ENCODE measurements at regions of chr7 and their contacts with region 1.

Region 1: DNA sequence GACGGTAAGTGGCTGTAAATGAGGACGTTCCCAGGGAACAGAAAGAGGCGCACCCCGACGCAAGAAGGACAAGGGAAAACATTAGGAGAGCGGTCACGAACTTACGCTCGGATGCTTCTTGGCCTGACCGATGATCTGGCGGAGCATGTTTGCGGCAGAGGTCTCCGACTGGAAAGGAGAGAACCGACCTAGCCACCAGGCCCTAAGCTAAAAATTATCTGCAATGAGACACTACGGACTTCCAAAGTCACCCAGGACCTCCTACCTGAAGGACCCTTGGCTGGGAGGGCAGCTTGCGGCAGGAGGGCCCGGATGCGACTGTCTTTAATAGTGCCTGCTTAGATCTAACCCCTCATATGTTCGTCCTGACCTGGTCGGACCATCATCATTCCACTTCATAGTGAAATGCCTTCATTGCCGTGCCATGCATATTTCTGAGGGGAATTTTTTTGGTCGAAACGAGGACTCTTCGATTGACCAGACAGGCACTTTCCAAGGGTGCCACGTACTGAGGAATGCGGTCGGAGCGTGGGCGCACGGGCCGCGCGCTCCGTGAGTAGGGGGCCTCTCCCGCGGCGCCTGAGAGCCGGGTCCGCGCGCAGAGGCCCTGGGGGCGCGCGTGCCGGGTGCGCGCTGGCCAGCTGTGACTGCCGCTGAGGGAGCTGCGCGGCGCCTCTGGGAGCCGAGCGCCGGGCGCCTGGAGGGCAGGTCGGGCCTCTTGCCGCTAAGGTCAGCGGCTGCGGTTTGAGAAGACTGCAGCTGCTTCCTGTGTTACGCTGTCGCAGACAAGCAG is 33.6 kb upstream of the PHF14 start:
- DNase-seq: peak; percentile 94
- ATAC-seq: peak; percentile 99
- H3K4me3 ChIP-seq: peak overlapping the region; percentile 85 to 94
- H3K27ac ChIP-seq: peak overlapping the region; percentile 90 to 95
- H3K4me1 ChIP-seq: peaks cover 3 to 7% of the 10 kb centered on the region in 2 donors
- H3K27me3 ChIP-seq: no peaks in the 10 kb centered on the region

Region 2: GRCh38 chr7:10908600-10908999 is 31.5 kb before region 1 on chr7:
- intact Hi-C with region 1: no loop called
- DNase-seq: no peak
- ATAC-seq: no peak
- H3K4me3 ChIP-seq: no peak overlapping the region
- H3K27ac ChIP-seq: no peak overlapping the region
- H3K4me1 ChIP-seq: no peaks in the 10 kb centered on the region
- H3K27me3 ChIP-seq: no peaks in the 10 kb centered on the region

Region 3: DNA sequence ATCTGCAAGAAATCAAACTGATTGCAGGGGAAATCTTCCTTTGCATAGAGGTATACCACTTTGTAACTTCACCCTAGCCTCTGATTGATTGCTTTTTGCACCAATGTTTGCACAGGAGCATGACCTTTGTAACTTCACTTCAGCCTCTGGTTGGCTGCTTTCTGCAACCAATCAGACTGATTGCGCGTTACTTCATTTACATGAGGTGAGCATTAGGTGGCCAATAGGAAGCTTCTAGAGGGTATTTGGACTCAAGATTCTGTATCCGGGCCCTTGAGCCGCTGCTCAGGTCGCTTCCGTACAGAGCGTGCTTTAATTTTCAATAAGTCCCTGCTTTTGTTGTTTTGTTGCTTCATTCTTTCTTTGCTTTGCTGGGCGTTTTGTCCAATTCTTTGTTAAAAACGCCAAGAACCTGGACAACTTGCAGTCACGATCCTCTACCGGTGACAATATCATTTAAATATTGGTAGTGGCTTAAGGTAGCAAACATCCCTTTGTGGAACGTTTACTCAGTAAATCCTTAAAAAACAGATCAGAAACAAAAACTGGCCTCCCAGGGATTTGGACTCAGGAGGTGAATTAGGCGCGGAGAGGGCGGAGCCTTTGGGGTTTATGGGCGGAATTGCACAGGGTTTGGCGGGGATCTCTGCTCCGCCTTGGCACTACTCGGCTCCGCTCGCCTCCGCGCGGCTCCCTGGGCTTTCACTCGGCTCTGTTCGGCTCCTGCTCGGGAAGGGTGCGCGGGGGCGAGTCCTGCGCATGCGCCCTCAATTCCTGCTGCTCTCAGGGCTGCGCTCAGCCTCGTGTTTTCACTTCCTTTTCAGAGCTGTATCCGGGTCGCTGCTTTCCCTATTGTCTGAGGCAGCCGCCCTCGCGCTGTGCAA is 33.2 kb after region 1 on chr7 and contains the start of gene PHF14:
- intact Hi-C with region 1: loop called (anchors 2 kb)
- DNase-seq: peak; percentile 98
- ATAC-seq: peak; percentile 100
- H3K4me3 ChIP-seq: peak within 1 kb of the TSS; percentile 74 to 97
- H3K27ac ChIP-seq: peak within 1 kb of the TSS in 1 of 2 donors; percentile 62
- H3K4me1 ChIP-seq: no peaks in the 10 kb centered on the region
- H3K27me3 ChIP-seq: no peaks in the 10 kb centered on the region
- total RNA-seq, gene PHF14: 35.5 to 51.8 TPM

Region 4: GRCh38 chr7:11120068-11120664 is 180.1 kb after region 1 on chr7:
- intact Hi-C with region 1: no loop called
- DNase-seq: no peak
- ATAC-seq: no peak
- H3K4me3 ChIP-seq: no peak overlapping the region
- H3K27ac ChIP-seq: no peak overlapping the region
- H3K4me1 ChIP-seq: no peaks in the 10 kb centered on the region
- H3K27me3 ChIP-seq: no peaks in the 10 kb centered on the region